Activated CD4-positive, alpha-beta memory T cell treated with anti-CD3 and anti-CD28 coated beads for 36 hours (primary cell): ENCODE measurements at regions of chr7 and their contacts with region 1.

Region 1: DNA sequence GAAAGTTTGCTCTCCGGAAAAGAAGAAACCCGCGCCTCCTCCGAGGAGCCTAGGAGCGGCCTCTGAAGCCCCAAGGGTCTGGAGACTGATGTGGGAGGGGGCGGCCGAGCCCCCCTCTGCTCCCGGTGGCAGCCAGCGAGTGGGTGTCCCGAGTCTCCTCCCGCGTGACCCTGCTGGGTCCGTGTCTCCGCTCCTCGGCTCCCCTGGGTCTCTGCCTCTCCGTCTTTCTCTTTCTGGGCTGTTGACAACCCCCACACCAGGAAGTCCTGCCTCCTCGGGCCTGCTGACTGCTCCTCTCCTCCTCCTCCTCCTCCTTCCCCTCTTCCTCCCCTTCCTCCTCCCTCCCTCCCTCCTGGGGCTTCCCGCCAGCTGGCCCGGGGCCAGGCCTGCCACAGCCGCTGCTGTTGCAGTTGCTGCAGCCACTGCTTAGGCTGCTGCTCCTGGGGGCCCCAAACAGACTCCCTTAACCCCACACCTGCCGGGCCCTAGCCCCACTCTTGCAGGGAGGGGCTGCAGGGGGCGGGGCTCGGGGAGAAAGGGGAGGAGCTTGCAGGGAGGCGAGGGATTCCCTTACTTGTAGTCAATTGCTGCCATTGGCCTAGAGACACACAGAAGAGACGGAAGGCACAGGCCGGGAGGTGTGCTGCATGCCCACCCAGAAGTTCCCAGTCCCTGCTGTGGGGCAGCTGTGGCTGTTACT is at the start of gene TSC22D4:
- DNase-seq: peak; percentile 95
- H3K4me3 Mint-ChIP-seq: peak within 1 kb of the TSS; percentile 95
- H3K27ac Mint-ChIP-seq: peak within 1 kb of the TSS; percentile 95
- H3K4me1 Mint-ChIP-seq: peaks cover 40% of the 10 kb centered on the region
- H3K27me3 Mint-ChIP-seq: no peaks in the 10 kb centered on the region
- total RNA-seq, gene TSC22D4: 87.8 to 89.5 TPM

Region 2: GRCh38 chr7:100493476-100494264 is 14.6 kb after region 1 on chr7:
- CTCF ChIA-PET with region 1: interaction called, 17 read pairs
- POLR2A ChIA-PET with region 1: no interaction called
- intact Hi-C with region 1: no loop called
- DNase-seq: peak; percentile 76
- H3K4me3 Mint-ChIP-seq: peak overlapping the region; percentile 64
- H3K27ac Mint-ChIP-seq: no peak overlapping the region
- H3K4me1 Mint-ChIP-seq: peaks cover 9% of the 10 kb centered on the region
- H3K27me3 Mint-ChIP-seq: peaks cover 1% of the 10 kb centered on the region

Region 3: DNA sequence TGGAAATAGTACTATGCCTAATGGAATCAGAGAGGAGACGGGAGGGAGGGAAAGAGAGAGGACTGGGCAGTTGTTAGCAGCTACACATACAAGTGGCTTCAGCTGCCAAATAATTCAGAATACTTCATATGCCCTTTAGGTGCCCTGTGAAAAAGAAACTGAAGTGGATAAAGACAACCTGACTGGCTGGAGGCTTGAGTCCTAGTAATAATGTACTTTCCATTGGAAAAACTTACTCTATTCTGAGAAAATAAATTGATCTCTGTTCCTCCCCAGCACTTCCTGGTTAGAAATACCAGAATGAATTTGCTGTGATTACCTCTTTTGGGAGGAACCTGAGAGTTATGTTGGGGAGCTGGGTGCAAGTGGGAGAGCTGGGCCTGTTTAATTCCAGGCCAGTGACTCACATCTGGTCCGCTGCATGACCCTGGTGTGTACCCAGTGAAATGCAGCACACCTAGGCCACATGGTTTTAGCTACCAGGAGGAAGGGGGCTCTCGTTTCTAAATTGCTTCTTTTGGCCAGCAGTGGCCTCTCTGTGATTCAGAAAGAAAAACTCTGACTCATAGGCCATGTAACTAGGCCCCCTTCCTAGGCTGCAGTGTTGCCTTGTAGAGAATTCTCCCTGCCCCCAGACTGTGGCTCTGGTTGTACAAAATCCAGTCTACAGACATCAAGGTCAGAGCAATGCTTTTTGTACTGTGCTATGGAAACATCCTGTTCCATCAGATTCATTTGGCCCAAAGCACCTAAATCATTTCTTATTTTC is 66.4 kb after region 1 on chr7:
- CTCF ChIA-PET with region 1: interaction called, 15 read pairs
- POLR2A ChIA-PET with region 1: interaction called, 15 read pairs
- intact Hi-C with region 1: loop called (anchors 1 kb)
- DNase-seq: peak; percentile 85
- H3K4me3 Mint-ChIP-seq: peak overlapping the region; percentile 72
- H3K27ac Mint-ChIP-seq: peak overlapping the region; percentile 98
- H3K4me1 Mint-ChIP-seq: peaks cover 94% of the 10 kb centered on the region
- H3K27me3 Mint-ChIP-seq: no peaks in the 10 kb centered on the region

Region 4: DNA sequence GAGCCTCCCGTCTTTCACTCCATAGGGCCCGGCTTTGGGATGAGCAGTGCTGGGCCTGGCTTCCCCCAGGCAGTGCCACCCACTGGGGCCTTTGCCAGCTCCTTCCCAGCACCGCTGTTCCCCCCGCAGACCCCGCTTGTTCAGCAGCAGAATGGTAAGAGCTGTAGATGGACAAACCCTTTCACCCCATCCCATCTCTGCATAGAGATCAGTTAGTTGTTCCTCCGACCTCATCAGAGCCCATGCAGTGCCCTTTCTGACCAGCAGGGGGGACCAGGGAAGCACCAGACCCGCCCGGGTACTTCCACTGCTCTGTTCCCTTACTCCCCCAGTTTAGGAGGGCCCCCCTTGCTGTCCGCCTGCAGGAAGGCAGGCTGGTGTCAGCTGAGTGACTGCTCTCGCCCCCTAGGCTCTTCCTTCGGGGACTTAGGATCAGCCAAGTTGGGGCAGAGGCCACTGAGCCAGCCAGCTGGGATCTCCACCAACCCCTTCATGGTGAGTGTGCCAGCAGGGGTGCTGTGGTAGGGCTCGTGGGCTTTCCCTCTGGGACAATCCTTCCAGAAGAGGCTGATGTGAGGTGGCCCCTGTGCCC is 84.8 kb after region 1 on chr7:
- CTCF ChIA-PET with region 1: interaction called, 104 read pairs
- POLR2A ChIA-PET with region 1: no interaction called
- intact Hi-C with region 1: no loop called
- DNase-seq: peak; percentile 86
- H3K4me3 Mint-ChIP-seq: no peak overlapping the region
- H3K27ac Mint-ChIP-seq: no peak overlapping the region
- H3K4me1 Mint-ChIP-seq: peaks cover 18% of the 10 kb centered on the region
- H3K27me3 Mint-ChIP-seq: no peaks in the 10 kb centered on the region

Region 5: DNA sequence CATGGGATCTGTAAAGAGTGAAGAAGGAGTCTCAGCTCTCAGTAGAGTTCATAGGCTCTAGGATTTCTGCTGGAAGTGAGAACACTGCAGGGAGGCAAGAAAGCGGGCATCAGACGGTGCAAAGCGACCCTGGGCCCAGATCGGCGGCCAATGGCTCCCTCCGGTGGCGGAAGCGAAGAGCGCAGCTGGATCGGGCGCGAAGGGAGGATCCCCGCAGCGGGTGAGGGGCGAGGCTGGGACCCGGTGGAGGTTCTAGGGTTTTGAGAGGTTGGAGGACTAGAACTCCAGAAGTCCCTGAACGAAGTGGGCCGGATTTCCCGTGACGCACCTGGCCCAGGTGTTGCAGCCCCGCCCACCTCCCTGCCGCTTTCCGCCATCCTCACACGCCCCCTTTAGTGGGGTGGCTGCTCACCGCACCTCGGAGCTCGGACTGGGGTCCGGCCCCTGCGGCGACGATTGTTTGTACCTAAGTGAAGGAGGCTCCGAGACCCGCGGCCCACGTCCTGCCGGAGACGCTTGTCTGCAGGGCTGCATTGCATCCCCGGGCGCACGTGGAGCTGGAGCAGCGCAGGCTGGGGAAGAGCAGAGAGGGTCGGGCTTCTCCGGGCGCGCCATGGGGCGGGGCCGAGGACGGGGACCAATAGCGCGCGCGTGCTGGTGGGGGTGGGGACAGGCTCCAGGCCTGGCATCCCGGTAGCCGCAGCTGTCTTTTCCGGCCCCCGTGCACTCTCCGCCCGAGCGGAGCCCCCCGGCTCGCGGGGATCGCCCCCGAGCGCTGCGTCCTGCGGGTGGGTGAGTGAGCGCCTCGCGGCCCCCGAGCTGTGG is 373.1 kb after region 1 on chr7 and contains the start of gene SLC12A9:
- CTCF ChIA-PET with region 1: interaction called, 3 read pairs
- POLR2A ChIA-PET with region 1: interaction called, 3 read pairs
- intact Hi-C with region 1: loop called (anchors 10 kb)
- DNase-seq: peak; percentile 92
- H3K4me3 Mint-ChIP-seq: peak within 1 kb of the TSS; percentile 92
- H3K27ac Mint-ChIP-seq: peak within 1 kb of the TSS; percentile 81
- H3K4me1 Mint-ChIP-seq: peaks cover 13% of the 10 kb centered on the region
- H3K27me3 Mint-ChIP-seq: no peaks in the 10 kb centered on the region
- total RNA-seq, gene SLC12A9: 17.8 to 18.5 TPM